Activated T-helper 1 cell treated with anti-CD3 and anti-CD28 coated beads, Interleukin-12 subunit alpha, Interleukin-12 subunit beta, Interleukin-2, Interleukin-4 antibody, amounts not matched to agents 30 ng/mL and 10 ng/mL and 1 ng/mL, durations not matched to agents 14 hours and 24 hours and 36 hours (primary cell): ENCODE measurements at regions of chr4 and their contacts with region 1.

Region 1: DNA sequence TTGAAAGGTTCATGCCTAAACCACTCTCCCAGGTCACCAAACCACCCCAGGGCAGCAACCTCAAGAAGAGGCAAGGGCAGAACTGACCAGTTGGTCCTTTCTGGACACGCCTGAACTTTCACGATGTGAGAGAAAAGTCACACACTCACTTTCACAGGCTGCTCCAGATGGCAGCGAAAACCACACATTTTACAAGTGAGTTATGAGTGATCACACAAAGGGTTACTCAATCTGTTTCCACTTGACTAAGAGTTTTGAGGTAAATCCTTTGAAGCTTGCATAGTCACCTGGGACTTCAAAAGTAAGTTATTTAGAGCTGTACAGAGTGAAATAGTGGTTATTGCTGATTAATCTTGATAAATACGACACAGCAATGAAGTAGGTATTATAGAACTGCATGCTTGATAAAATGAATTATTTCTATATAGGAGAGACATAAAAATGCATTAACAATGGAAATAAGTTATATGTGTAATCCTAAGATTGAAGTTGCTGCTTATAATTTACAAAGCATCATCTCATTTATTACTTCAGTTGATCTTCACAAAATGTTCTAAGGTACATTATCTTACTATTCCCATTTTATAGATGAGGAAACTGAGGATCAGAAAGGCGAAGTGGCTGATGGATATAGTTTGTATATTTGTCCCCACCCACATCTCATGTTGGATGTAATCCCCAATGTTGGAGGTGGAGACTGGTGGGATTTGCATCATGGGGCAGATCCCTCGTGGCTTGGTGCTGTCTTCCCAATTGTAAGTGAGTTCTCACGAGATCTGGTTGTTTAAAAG is 103.0 kb upstream of the KLF3 start:
- DNase-seq: peak; percentile 8
- H3K4me3 Mint-ChIP-seq: no peak overlapping the region
- H3K27ac Mint-ChIP-seq: no peak overlapping the region
- H3K4me1 Mint-ChIP-seq: peaks cover 13% of the 10 kb centered on the region
- H3K27me3 Mint-ChIP-seq: peaks cover 26% of the 10 kb centered on the region

Region 2: GRCh38 chr4:38381788-38382187 is 179.2 kb before region 1 on chr4:
- intact Hi-C with region 1: no loop called
- DNase-seq: no peak
- H3K4me3 Mint-ChIP-seq: no peak overlapping the region
- H3K27ac Mint-ChIP-seq: no peak overlapping the region
- H3K4me1 Mint-ChIP-seq: no peaks in the 10 kb centered on the region
- H3K27me3 Mint-ChIP-seq: peaks cover 3% of the 10 kb centered on the region

Region 3: DNA sequence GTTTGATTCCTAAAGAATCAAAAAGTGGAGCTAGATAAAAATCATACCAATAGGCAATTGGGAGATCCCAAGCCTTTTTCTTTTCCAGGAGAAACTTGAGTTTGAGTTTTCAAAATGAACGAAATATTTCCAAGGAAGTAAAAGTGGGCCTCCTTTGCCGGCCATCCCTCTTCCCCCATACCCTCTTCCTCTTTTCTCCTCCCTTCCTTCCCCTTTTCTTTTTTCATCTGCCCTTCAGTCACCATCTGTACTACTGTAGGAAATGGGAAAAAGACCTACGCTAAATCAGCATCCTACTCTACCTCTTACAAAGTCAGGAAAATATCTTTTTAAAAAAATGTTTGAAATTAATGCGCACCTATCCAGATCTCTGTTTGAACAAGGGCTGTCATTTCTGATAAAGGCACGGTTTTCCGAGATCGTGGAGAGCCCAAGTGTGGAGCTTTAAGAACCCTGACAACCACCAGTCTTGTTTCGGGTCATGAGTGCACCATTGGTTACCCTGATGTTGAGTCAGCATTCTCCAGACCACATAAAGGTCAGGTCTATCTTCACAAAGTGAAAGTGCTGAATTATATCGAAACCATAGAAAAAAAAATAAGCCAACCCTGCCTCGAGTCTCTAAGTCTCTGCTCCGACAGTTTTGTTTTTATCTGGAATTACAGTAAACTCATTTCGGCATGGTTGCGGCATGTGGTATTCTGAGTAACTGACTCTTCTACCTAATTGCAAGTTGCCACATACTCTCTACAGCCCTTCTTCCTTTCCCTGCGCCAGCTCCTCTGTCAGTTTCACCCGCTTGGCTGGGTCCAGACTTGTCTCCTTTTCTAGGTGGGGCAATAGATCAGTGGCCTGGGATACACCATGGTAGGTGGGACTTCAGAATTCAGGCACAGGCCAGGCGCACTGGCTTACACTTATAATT is 37.2 kb before region 1 on chr4:
- intact Hi-C with region 1: loop called (anchors 1 kb)
- DNase-seq: peak; percentile 48
- H3K4me3 Mint-ChIP-seq: peak overlapping the region; percentile 19
- H3K27ac Mint-ChIP-seq: peak overlapping the region; percentile 51
- H3K4me1 Mint-ChIP-seq: peaks cover 23% of the 10 kb centered on the region
- H3K27me3 Mint-ChIP-seq: peaks cover 32% of the 10 kb centered on the region